ENCODE measurements at regions of chr16 and their contacts with region 1.

Region 1: DNA sequence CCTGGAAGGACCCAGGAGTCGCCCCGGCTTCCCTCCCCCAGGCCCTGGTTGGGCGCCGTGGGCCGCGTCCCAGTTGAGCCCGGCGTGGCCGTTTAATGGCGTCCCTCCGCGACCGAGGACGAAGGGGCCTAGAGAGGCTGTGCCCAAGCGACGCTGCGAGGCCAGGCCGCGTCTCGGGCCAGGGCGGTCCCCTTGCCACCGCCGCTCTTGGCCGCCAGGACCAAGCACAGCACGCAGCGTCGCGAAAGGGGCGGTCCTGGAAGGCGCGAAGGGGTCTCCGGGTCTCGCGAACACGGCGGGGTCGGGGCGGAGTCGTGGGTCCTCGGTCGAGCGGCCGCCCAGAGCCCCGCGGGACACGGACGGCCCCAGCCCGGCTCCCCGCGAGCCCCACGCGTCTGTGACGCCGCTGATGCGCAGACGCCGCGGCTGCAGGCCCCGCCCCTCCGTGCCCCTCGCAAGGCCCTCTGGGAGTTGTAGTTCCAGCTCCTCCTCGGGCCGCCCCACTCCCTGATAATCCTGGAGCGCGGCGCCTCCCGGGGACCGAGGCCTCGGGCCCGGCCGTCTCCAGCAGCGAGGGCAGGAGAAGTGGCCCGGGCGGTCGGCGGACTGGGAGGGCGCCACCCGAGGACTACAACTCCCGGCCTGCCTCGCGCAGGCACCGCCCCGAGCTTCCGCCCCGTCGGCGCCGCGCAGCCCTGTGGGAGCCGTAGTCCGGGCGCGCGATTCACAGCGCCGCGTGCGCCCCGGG is at the start of gene CAPN15:
- DNase-seq: peak; percentile 88
- H3K4me3 Mint-ChIP-seq: peak within 1 kb of the TSS; percentile 91
- H3K27ac Mint-ChIP-seq: peak within 1 kb of the TSS; percentile 99
- H3K4me1 Mint-ChIP-seq: peaks cover 39% of the 10 kb centered on the region
- H3K27me3 Mint-ChIP-seq: no peaks in the 10 kb centered on the region
- total RNA-seq, gene CAPN15: 69.7 to 76.2 TPM

Region 2: DNA sequence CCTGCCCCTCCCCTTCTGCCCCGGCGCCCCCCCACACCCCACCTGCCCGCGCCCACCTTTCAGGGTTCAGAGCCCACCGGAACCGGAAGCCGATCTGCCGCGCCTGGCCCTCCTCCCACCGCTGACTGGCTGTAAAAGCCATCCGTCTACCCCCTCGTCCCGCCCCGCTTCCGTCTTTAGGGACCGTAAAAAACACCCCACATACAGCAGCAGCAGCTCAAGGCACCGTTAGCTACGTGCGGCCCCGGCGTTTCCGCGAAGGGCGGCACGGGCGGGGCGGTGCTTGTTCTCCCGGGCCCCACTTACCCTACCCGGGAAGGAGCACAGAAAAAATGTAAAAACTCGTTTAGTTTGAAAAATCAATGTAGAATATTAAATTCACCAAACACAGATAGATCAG is 156.7 kb before region 1 on chr16 and contains the start of gene MRPL28:
- CTCF ChIA-PET with region 1: no interaction called
- POLR2A ChIA-PET with region 1: no interaction called
- intact Hi-C with region 1: loop called (anchors 1 kb)
- DNase-seq: peak; percentile 97
- H3K4me3 Mint-ChIP-seq: peak within 1 kb of the TSS; percentile 85
- H3K27ac Mint-ChIP-seq: peak within 1 kb of the TSS; percentile 85
- H3K4me1 Mint-ChIP-seq: peaks cover 11% of the 10 kb centered on the region
- H3K27me3 Mint-ChIP-seq: no peaks in the 10 kb centered on the region
- total RNA-seq, gene MRPL28: 76.8 to 77.3 TPM

Region 3: GRCh38 chr16:391885-392335 is 135.3 kb before region 1 on chr16:
- CTCF ChIA-PET with region 1: interaction called, 6 read pairs
- POLR2A ChIA-PET with region 1: interaction called, 4 read pairs
- intact Hi-C with region 1: loop called (anchors 5 kb)
- DNase-seq: peak; percentile 90
- H3K4me3 Mint-ChIP-seq: no peak overlapping the region
- H3K27ac Mint-ChIP-seq: peak overlapping the region; percentile 54
- H3K4me1 Mint-ChIP-seq: peaks cover 20% of the 10 kb centered on the region
- H3K27me3 Mint-ChIP-seq: no peaks in the 10 kb centered on the region

Region 4: GRCh38 chr16:495127-495748 is 31.9 kb before region 1 on chr16:
- CTCF ChIA-PET with region 1: no interaction called
- POLR2A ChIA-PET with region 1: no interaction called
- intact Hi-C with region 1: no loop called
- DNase-seq: peak; percentile 35
- H3K4me3 Mint-ChIP-seq: no peak overlapping the region
- H3K27ac Mint-ChIP-seq: no peak overlapping the region
- H3K4me1 Mint-ChIP-seq: no peaks in the 10 kb centered on the region
- H3K27me3 Mint-ChIP-seq: no peaks in the 10 kb centered on the region

Region 5: DNA sequence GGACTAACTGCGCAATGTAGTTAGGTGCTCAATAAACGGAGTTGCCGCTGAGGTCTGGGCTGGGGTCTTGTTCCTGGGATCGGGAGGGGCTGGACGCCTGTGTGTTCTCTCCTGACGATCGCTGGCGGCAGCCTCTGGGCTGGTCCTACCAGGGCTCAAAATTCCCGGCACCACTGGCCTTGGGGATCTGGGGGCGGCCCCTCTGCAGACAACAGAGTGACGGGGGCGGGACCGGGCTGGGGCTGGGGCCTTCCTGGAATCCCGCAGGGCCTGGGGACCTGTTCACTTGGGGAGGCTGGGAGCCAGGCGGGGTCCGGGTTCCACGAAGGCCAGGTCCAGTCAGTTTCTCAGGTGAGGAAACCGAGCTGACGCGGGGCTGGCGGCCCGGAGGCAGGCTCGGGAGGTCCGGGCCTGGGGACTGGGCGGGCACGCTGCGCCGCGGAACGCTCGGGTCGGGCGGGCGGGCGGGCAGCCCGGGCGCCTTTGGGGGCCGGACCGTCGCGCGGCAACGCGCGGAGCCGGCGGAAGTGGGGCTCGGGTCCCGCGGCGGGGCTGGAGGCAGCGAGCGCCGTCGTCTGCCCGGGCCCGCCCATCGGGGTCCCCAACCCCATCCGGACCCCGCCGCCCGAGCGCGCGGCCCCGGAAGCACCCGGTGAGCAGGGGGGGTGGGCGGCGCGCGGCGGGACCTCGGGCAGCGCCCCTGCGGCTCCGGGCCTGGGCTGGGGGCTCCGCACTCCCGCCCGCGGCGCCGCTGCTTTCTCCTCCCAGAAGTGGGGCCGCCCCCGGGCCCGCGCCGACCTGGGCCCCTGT is 42.5 kb after region 1 on chr16 and contains the start of gene PIGQ:
- CTCF ChIA-PET with region 1: no interaction called
- POLR2A ChIA-PET with region 1: interaction called, 3 read pairs
- intact Hi-C with region 1: loop called (anchors 2 kb)
- DNase-seq: peak; percentile 76
- H3K4me3 Mint-ChIP-seq: peak within 1 kb of the TSS; percentile 79
- H3K27ac Mint-ChIP-seq: peak within 1 kb of the TSS; percentile 88
- H3K4me1 Mint-ChIP-seq: peaks cover 33% of the 10 kb centered on the region
- H3K27me3 Mint-ChIP-seq: no peaks in the 10 kb centered on the region
- total RNA-seq, gene PIGQ: 24.2 to 26.2 TPM

Region 6: DNA sequence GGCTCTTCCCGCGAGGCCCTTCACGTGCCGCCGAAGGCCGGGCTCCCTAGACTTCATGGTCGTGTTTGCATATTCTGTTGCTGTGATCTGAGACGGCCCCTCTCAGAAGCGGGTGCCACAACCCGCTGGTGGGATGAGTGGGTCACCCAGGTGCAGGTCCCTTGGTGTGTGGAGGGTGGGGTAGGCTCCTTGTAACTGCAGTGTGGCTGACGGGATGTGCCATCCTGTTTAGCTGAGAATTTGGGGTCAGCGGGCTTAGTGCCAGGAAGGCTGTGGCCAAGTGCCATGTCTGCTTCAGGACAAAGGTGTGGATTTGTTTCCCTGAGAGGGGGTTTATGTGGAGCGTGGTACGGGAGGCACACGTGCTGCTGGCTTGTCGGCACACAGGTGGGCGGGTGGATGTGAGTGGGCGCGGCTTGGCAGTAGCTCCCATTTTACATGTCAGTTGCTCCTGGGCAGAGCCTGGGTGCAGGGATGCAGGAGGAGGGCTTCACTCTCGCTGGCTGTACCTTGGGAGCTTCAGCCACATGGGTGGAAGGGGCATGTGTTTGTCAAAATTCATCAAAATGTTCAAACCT is 94.4 kb after region 1 on chr16:
- CTCF ChIA-PET with region 1: no interaction called
- POLR2A ChIA-PET with region 1: no interaction called
- intact Hi-C with region 1: no loop called
- DNase-seq: no peak
- H3K4me3 Mint-ChIP-seq: no peak overlapping the region
- H3K27ac Mint-ChIP-seq: no peak overlapping the region
- H3K4me1 Mint-ChIP-seq: no peaks in the 10 kb centered on the region
- H3K27me3 Mint-ChIP-seq: no peaks in the 10 kb centered on the region